Posterior vena cava (tissue), 2 donors: ENCODE measurements at regions of chr16 and their contacts with region 1.

Region 1: GRCh38 chr16:89700100-89700648 is 1.3 kb downstream of the SPATA2L start:
- DNase-seq: peak; percentile 99

Region 2: GRCh38 chr16:89798832-89799370 is 98.7 kb after region 1 on chr16:
- intact Hi-C with region 1: loop called (anchors 5 to 10 kb)
- DNase-seq: no peak